ENCODE measurements at regions of chr19 and their contacts with region 1.

Region 1: DNA sequence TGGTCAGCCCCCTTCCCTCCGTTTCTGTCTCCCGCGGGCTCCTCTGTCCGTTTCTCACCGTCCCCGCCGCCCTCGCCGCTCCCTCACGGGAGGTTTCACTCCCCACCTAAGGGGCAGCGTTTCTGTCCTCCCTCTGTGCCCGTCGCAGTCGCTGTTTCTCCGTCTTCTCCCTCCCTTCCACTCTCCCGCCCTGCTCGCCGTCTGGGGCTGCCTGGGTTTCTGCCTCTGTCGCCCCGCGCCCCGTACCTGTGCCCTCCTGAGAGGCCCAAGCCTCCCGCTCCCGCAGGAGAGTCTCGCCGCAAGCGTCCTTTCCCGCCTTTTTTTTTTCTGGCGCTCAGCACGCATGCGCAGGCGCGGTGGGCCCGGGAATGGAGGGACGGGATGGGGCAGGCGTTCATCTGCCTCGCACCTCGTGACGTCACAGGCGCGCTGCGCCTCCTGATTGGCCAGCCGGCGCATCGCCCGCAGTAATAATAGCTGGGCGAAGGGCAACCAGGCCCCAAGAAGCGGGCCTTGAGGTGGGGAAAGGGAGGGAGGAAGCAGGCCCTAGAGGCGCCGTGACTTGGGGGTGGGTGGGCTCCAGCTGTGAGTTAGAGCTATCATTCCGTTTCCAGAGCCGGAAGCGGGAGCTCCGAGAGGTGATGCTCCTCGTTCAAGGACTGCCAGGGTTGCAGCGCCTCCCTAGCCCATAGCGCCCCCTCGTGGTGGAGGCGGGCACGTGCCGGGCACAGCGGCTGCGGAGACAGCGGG is 15.4 kb downstream of the SSC5D start:
- DNase-seq: peak; percentile 73 to 95
- H3K4me3 ChIP-seq: peak overlapping the region; percentile 48 to 71
- H3K27ac ChIP-seq: peak overlapping the region; percentile 71 to 87
- H3K4me1 ChIP-seq: peaks cover 2 to 3% of the 10 kb centered on the region in 2 donors
- H3K27me3 ChIP-seq: no peaks in the 10 kb centered on the region
- CTCF ChIP-seq: peak; percentile 99 to 100 (median 99)

Region 2: DNA sequence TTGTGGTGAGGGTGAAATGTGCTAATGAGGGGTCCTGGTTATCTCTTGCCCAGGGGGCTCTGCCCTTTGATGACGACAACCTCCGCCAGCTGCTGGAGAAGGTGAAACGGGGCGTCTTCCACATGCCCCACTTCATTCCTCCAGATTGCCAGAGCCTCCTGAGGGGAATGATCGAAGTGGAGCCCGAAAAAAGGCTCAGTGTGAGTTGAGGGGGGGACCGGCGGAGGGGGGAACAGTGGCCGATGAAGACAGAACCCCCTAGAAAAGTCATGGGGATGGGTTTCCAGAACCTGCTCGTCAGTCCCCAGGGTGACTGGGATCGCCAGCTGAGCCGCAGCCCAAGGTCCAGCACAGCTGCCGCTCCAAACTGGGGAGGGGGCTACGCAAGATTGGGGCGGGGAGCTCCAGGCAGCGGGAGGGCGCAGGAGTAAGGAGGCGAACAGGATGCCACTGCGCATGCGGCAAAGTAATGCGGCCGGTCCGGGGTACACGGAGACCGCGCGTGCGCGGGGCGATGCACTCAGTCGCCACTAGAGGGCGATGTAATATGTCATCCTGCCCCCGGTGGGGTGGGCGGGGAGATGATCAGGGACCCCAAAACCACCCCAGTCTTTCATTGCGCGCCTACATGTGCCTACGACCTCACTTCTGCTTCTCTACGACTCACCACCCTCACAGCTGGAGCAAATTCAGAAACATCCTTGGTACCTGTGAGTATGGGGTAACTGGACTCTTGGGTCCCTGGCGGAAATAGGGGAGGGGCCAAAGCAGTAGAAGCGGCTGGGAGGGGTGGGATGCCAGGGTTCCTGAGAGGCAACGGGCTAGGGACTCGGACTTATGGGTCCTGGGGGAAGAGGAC is 202.0 kb before region 1 on chr19:
- intact Hi-C with region 1: loop called (anchors 5 kb)
- DNase-seq: peak; percentile 36 to 88
- H3K4me3 ChIP-seq: peak overlapping the region; percentile 39 to 52
- H3K27ac ChIP-seq: no peak overlapping the region
- H3K4me1 ChIP-seq: peaks cover 0 to 7% of the 10 kb centered on the region in 2 donors
- H3K27me3 ChIP-seq: no peaks in the 10 kb centered on the region
- CTCF ChIP-seq: peak; percentile 87 to 97 (median 94)

Region 3: DNA sequence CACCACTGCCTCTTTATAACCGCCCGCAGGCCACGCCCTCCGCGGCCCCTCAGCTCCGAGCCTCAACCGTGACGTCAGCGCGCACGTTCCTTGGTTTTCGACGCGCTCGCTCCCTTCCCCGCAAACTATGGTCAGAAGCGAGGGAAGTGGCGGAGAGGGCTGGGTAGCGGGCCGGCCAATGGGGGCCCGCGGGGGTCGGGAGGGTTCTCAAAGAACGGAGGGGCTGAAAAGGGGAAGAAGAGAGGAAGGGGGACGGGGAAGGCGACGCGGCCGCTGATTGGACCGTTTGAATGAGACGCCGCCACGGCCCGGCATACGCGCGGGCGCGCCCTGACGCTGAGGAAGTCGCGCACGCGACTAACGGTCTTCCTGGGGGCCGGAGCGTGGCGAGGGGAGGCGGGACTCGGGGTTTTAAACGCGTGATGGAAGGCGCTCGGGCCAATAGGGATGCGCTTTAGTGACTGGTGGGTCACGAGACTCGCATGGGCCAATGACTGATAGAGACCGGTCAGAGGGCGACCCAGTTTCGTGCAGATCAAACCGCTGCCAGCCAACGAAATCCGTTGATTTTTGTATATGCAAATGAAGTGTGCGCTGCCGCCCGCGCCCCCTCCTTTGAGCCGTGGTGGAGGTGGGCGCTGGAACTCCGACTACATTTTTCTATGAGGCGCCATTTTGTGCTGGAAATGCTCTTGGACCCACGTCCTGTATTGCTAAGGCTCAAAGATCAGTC is 95.7 kb before region 1 on chr19:
- intact Hi-C with region 1: loop called (anchors 5 kb)
- DNase-seq: peak; percentile 95 to 99
- H3K4me3 ChIP-seq: peak overlapping the region; percentile 86 to 92
- H3K27ac ChIP-seq: peak overlapping the region; percentile 96 to 99
- H3K4me1 ChIP-seq: peaks cover 11 to 13% of the 10 kb centered on the region in 2 donors
- H3K27me3 ChIP-seq: no peaks in the 10 kb centered on the region
- CTCF ChIP-seq: no peak

Region 4: DNA sequence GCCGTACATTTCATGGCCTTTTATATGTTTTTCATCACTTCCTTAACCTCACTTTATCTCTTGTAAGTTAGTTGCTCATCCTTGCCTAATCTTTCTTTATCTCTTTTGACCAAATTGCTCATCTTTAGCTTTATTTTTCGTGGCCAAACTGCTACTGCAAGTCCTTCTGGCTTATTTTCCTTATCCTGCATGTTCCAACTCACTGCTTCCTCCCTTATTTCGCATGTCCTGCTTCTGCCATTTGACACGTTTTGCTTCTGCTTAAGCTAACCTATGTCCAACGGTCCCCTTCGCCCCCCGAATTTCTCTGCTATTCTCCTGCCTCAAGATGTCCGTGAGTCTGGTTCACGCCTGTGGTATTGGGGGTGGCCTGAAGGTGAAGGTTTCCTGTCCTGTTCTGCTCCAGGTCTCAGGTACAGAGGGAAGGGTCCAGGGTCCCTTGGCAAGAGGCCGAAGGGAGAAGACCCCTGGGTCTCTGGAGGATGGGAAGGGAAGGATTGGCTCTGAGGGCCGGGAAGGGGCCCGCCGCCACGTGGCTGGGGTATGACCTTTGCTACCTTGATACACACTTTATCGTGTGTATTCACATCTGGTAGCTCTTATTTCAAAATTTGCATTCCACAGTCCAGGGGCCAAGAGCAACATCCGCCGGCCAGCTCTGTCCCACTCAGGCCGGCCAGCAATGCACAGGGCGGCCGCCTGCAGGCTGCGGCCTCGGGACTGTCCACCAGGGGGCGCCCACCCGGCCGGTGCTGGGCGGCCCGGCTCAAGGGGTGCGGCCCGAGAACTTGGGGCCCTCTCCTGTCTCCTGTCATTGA is 36.2 kb before region 1 on chr19:
- intact Hi-C with region 1: loop called (anchors 1 kb)
- DNase-seq: peak in 1 of 2 donors; percentile 85
- H3K4me3 ChIP-seq: no peak overlapping the region
- H3K27ac ChIP-seq: no peak overlapping the region
- H3K4me1 ChIP-seq: peaks cover 0 to 6% of the 10 kb centered on the region in 2 donors
- H3K27me3 ChIP-seq: no peaks in the 10 kb centered on the region
- CTCF ChIP-seq: peak; percentile 95 to 100 (median 97)

Region 5: GRCh38 chr19:55487632-55488152 is 16.0 kb before region 1 on chr19:
- intact Hi-C with region 1: loop called (anchors 1 kb)
- DNase-seq: peak; percentile 63 to 88
- H3K4me3 ChIP-seq: peak overlapping the region in 1 of 2 donors; percentile 52
- H3K27ac ChIP-seq: peak overlapping the region; percentile 85 to 90
- H3K4me1 ChIP-seq: peaks cover 23 to 42% of the 10 kb centered on the region in 2 donors
- H3K27me3 ChIP-seq: no peaks in the 10 kb centered on the region
- CTCF ChIP-seq: no peak

Region 6: GRCh38 chr19:55809381-55810058 is 305.8 kb after region 1 on chr19:
- intact Hi-C with region 1: no loop called
- DNase-seq: peak; percentile 8 to 62
- H3K4me3 ChIP-seq: no peak overlapping the region
- H3K27ac ChIP-seq: no peak overlapping the region
- H3K4me1 ChIP-seq: no peaks in the 10 kb centered on the region
- H3K27me3 ChIP-seq: no peaks in the 10 kb centered on the region
- CTCF ChIP-seq: no peak